ENCODE measurements at regions of chr15 and their contacts with region 1.

Region 1: DNA sequence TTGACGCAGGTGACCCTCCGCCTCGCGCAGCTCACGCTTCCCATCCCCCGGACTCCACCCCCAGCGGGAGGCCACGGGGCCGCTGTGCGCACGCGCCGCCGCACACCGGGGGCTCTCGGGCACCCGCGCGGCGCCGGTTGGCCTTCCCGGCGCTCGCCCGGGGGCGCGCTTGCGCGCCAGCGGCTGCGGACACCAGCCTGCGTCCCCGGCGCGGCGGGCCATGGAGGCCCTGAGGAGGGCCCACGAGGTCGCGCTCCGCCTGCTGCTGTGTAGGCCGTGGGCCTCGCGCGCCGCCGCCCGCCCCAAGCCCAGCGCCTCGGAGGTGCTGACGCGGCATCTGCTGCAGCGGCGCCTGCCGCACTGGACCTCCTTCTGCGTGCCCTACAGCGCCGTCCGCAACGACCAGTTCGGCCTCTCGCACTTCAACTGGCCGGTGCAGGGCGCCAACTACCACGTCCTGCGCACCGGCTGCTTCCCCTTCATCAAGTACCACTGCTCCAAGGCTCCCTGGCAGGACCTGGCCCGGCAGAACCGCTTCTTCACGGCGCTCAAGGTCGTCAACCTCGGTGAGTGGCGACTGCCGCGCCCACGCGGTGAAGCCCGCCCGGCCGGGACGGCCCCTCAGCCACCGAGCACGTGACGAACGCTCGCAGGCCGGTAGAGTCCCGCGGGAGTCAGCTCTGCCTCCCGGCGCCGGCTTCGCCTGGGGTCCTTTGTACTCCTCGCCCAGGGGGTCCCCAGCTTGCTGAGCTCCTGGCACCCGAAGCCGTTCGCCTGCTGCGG is at the start of gene C15orf61:
- DNase-seq: peak; percentile 92
- H3K4me3 ChIP-seq: peak within 1 kb of the TSS; percentile 83
- H3K27ac ChIP-seq: peak within 1 kb of the TSS; percentile 65
- H3K4me1 ChIP-seq: peaks cover 25% of the 10 kb centered on the region
- CTCF ChIP-seq: 0 out of 2 replicates have a peak, but pooled peaks have one; percentile 47
- total RNA-seq, gene C15orf61: 13.3 and 18.3 TPM in 2 replicates

Region 2: GRCh38 chr15:67542420-67543347 is 21.5 kb after region 1 on chr15 and contains the start of gene MAP2K5:
- CTCF ChIA-PET with region 1: no interaction called
- POLR2A ChIA-PET with region 1: interaction called, 4 read pairs
- intact Hi-C with region 1: loop called (anchors 1 kb)
- DNase-seq: peak; percentile 83
- H3K4me3 ChIP-seq: peak within 1 kb of the TSS; percentile 81
- H3K27ac ChIP-seq: peak within 1 kb of the TSS; percentile 77
- H3K4me1 ChIP-seq: peaks cover 59% of the 10 kb centered on the region
- CTCF ChIP-seq: no peak
- total RNA-seq, gene MAP2K5: 9.0 and 10.2 TPM in 2 replicates

Region 3: DNA sequence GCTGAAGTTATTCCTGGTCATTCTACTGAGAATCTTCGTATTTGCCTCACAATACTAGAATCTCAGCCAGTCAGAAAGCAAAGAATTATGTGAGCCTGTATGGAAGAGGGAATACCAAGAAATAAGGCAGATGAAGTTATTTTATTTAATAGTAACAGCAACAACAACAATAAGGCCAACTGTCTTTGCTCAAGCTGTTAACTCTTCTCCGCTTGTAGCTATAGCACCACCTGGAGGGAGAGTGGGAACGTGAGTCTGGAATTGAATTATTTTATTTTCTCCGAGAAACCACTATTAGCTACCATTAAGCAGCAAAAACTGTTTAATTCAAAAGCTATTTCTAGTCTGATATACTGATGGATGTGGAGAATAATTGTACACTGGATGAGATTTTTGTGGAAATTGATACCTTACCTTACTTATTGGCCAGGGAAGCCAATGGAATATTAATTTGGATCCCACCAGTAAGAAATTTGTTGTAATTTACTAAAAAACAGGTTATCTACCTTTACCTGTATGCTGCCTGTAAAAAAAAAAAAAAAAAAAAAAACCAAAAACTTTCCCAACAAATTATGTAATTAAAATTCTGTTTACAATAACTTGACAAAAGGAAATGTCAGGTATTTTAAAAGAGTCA is 633.8 kb after region 1 on chr15:
- CTCF ChIA-PET with region 1: no interaction called
- POLR2A ChIA-PET with region 1: no interaction called
- intact Hi-C with region 1: no loop called
- DNase-seq: peak; percentile 72
- H3K4me3 ChIP-seq: no peak overlapping the region
- H3K27ac ChIP-seq: peak overlapping the region; percentile 16
- H3K4me1 ChIP-seq: peaks cover 8% of the 10 kb centered on the region
- CTCF ChIP-seq: peak; percentile 96